Activated naive CD4-positive, alpha-beta T cell treated with anti-CD3 and anti-CD28 coated beads for 36 hours (primary cell): ENCODE measurements at regions of chr9 and their contacts with region 1.

Region 1: GRCh38 chr9:74773886-74774479 is 113.7 kb downstream of the TRPM6 start:
- DNase-seq: peak; percentile 85
- H3K4me3 Mint-ChIP-seq: no peak overlapping the region
- H3K27ac Mint-ChIP-seq: no peak overlapping the region
- H3K4me1 Mint-ChIP-seq: peaks cover 14% of the 10 kb centered on the region
- H3K27me3 Mint-ChIP-seq: peaks cover 14% of the 10 kb centered on the region

Region 2: GRCh38 chr9:74887041-74887980 is 113.3 kb after region 1 on chr9 and contains the start of gene TRPM6:
- CTCF ChIA-PET with region 1: interaction called, 3 read pairs
- intact Hi-C with region 1: loop called (anchors 5 kb)
- DNase-seq: peak; percentile 56
- H3K4me3 Mint-ChIP-seq: peak within 1 kb of the TSS; percentile 77
- H3K27ac Mint-ChIP-seq: no peak within 1 kb of the TSS
- H3K4me1 Mint-ChIP-seq: peaks cover 8% of the 10 kb centered on the region
- H3K27me3 Mint-ChIP-seq: peaks cover 46% of the 10 kb centered on the region
- total RNA-seq, gene TRPM6: not detected

Region 3: DNA sequence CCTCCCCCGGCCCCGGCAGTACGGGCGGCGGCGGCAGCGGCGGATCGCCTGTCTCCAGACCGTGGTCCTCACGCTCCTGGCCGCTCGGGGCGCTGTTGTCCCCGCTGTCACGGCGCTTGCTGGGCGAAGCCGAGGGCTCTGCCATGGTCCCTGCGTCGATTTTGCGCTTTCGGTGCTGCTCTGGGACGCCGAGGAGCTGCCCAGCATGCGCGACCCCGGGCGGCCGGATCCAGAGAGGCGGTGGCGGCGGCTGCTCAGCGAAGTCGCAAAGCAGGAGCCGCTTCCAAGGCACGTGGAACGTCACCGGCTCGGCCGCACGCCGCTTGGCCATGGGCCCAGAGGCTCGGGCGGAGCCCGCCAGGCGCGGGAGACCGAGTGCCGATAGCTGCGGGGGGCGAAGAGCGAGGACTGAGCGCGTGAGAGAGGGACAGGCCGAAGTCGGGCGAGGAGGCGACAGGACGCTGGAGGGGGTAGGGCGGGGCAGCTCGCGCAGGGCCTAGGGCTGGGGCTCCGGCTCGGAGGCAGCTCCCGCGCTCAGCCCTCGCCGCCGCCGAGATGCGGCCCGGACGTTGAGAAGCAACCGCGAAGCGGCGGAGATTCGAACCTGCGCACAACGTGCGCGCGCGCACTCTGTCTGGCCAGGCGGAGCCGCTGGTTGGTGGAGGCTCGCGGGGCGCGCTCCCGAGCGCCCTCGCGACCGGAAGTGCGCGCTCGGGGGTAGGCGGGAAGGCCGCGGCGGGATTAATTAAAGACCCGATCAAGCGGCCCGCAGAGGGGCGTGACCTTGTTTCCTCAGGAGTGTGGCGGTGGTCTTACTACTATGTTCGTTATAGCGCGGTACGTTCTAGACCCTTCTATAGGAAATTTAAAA is 178.5 kb after region 1 on chr9 and contains the start of gene C9orf40:
- CTCF ChIA-PET with region 1: interaction called, 42 read pairs
- intact Hi-C with region 1: loop called (anchors 2 kb)
- DNase-seq: peak; percentile 92
- H3K4me3 Mint-ChIP-seq: peak within 1 kb of the TSS; percentile 95
- H3K27ac Mint-ChIP-seq: peak within 1 kb of the TSS; percentile 89
- H3K4me1 Mint-ChIP-seq: peaks cover 26% of the 10 kb centered on the region
- H3K27me3 Mint-ChIP-seq: no peaks in the 10 kb centered on the region
- total RNA-seq, gene C9orf40: 23.1 to 23.9 TPM

Region 4: DNA sequence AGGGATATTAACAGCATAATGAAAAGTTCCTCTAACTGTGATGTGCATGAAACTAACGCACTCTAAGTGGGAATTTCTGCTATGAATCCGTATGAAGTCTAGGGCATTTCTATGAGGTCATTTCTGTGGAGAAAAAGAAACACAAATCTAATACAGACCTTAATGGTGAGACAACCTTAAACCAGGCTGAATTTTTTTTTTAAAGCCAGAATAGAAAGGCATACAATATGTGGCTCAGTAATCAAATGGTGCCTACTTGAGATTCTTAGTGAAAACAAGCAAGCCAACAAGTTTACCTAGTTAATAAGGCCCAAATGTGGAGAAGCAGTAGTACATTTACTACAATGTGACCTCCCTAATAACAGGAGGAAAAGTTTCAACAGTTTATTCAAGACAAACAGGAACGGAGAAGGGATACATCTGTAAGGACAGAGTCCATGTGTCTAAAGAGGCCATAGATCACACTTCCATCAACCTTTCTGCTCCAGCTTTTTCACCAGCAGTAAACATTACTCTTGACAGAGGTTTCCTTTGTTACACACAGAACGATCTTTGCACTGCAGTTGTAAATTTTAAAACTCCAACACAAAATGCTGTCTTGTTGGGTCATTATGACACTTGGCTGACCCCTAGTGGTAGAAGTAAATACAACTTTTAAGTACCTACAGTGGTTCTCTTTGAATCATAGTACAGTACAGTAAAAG is 227.9 kb after region 1 on chr9:
- CTCF ChIA-PET with region 1: interaction called, 93 read pairs
- intact Hi-C with region 1: loop called (anchors 1 kb)
- DNase-seq: no peak
- H3K4me3 Mint-ChIP-seq: no peak overlapping the region
- H3K27ac Mint-ChIP-seq: no peak overlapping the region
- H3K4me1 Mint-ChIP-seq: no peaks in the 10 kb centered on the region
- H3K27me3 Mint-ChIP-seq: no peaks in the 10 kb centered on the region

Region 5: DNA sequence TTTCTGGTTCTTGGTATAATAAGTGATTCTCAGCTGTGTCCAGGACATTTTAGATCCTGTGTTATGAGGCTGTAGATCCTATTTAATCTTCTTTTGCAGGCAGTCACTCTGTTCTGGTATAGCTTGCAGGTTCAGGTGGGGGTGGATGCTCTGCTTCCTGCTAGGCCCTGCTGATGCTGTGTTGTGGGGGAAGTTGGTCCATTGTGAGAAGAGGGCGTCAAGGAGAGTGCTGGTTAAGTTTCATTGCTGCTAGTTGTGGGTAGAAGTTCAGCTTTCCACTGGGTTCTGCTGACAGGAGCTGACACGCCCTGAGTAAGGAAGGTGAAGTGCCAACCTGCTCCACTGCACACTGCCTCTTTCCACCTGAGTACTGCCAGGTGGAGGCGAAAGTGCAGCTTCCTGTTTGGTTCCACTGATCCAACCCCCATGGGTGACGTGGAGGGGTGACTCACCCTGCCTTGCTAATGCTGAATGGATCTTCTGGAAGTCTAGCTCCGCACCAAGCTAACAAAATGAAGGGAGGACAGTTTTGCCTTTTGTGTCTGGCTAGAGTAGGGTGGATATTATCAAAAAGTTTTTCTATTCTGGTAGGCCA is 297.6 kb after region 1 on chr9:
- CTCF ChIA-PET with region 1: interaction called, 28 read pairs
- intact Hi-C with region 1: no loop called
- DNase-seq: peak; percentile 90
- H3K4me3 Mint-ChIP-seq: peak overlapping the region; percentile 0
- H3K27ac Mint-ChIP-seq: peak overlapping the region; percentile 79
- H3K4me1 Mint-ChIP-seq: peaks cover 41% of the 10 kb centered on the region
- H3K27me3 Mint-ChIP-seq: no peaks in the 10 kb centered on the region

Region 6: GRCh38 chr9:75238311-75238978 is 464.5 kb after region 1 on chr9:
- CTCF ChIA-PET with region 1: interaction called, 5 read pairs
- intact Hi-C with region 1: loop called (anchors 1 kb)
- DNase-seq: peak; percentile 58
- H3K4me3 Mint-ChIP-seq: no peak overlapping the region
- H3K27ac Mint-ChIP-seq: no peak overlapping the region
- H3K4me1 Mint-ChIP-seq: no peaks in the 10 kb centered on the region
- H3K27me3 Mint-ChIP-seq: no peaks in the 10 kb centered on the region

Region 7: GRCh38 chr9:75866273-75866871 is 1092.4 kb after region 1 on chr9:
- CTCF ChIA-PET with region 1: interaction called, 4 read pairs
- intact Hi-C with region 1: loop called (anchors 5 kb)
- DNase-seq: peak; percentile 75
- H3K4me3 Mint-ChIP-seq: no peak overlapping the region
- H3K27ac Mint-ChIP-seq: no peak overlapping the region
- H3K4me1 Mint-ChIP-seq: peaks cover 15% of the 10 kb centered on the region
- H3K27me3 Mint-ChIP-seq: no peaks in the 10 kb centered on the region